Calu3 (cell line): ENCODE measurements at regions of chr2 and their contacts with region 1.

Region 1: GRCh38 chr2:206981739-206982340 is 42.5 kb downstream of the CPO start:
- DNase-seq: peak; percentile 68
- H3K4me3 Mint-ChIP-seq: no peak overlapping the region
- H3K27ac Mint-ChIP-seq: no peak overlapping the region
- H3K4me1 Mint-ChIP-seq: no peaks in the 10 kb centered on the region
- H3K27me3 Mint-ChIP-seq: no peaks in the 10 kb centered on the region
- CTCF ChIP-seq: peak; percentile 28

Region 2: DNA sequence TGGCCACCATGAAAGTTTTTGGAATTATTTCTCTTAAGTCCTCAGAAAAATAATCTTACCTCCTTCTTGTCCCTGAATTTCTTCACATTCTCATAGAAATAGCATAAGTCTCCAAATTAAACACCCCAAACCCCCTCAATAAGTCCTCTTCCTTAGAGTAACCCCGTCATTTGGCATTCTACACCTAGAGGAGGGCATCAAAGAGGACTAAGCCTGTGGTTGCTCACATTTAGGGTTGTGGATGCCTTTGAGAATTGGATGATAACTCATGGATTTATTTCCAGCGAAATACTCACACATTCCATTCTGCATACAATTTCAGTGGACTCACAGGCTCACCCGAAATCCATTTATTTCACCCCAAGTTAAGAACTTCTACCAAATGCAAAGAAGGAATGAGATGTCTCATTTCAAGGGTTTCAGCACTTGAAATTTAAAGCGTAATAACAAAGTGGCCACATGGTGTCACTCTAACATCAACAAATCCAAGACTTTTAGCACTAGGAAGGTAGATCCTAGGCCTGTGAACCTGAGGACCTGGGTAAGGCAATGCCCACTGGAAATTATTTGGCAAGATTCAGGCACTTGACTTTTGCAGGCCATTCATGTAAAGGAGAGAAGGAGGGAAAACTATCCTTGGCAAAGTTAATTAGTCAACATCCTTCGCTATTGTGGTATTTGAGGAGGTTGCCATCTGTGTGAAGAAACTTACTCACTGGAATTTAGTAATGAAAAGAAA is 288.3 kb before region 1 on chr2:
- CTCF ChIA-PET with region 1: no interaction called
- intact Hi-C with region 1: loop called (anchors 10 kb)
- DNase-seq: peak; percentile 58
- H3K4me3 Mint-ChIP-seq: no peak overlapping the region
- H3K27ac Mint-ChIP-seq: no peak overlapping the region
- H3K4me1 Mint-ChIP-seq: no peaks in the 10 kb centered on the region
- H3K27me3 Mint-ChIP-seq: peaks cover 11% of the 10 kb centered on the region
- CTCF ChIP-seq: peak; percentile 70

Region 3: GRCh38 chr2:206800506-206801417 is 181.1 kb before region 1 on chr2:
- CTCF ChIA-PET with region 1: interaction called, 4 read pairs
- intact Hi-C with region 1: loop called (anchors 5 kb)
- DNase-seq: peak; percentile 64
- H3K4me3 Mint-ChIP-seq: no peak overlapping the region
- H3K27ac Mint-ChIP-seq: no peak overlapping the region
- H3K4me1 Mint-ChIP-seq: no peaks in the 10 kb centered on the region
- H3K27me3 Mint-ChIP-seq: no peaks in the 10 kb centered on the region
- CTCF ChIP-seq: peak; percentile 62

Region 4: GRCh38 chr2:207103132-207103531 is 121.3 kb after region 1 on chr2:
- CTCF ChIA-PET with region 1: no interaction called
- intact Hi-C with region 1: no loop called
- DNase-seq: no peak
- H3K4me3 Mint-ChIP-seq: no peak overlapping the region
- H3K27ac Mint-ChIP-seq: no peak overlapping the region
- H3K4me1 Mint-ChIP-seq: no peaks in the 10 kb centered on the region
- H3K27me3 Mint-ChIP-seq: no peaks in the 10 kb centered on the region
- CTCF ChIP-seq: no peak

Region 5: GRCh38 chr2:207173660-207174059 is 191.8 kb after region 1 on chr2:
- CTCF ChIA-PET with region 1: no interaction called
- intact Hi-C with region 1: loop called (anchors 5 kb)
- DNase-seq: no peak
- H3K4me3 Mint-ChIP-seq: no peak overlapping the region
- H3K27ac Mint-ChIP-seq: no peak overlapping the region
- H3K4me1 Mint-ChIP-seq: peaks cover 8% of the 10 kb centered on the region
- H3K27me3 Mint-ChIP-seq: no peaks in the 10 kb centered on the region
- CTCF ChIP-seq: no peak

Region 6: GRCh38 chr2:207473049-207473930 is 491.4 kb after region 1 on chr2:
- CTCF ChIA-PET with region 1: interaction called, 7 read pairs
- intact Hi-C with region 1: loop called (anchors 1 kb)
- DNase-seq: no peak
- H3K4me3 Mint-ChIP-seq: no peak overlapping the region
- H3K27ac Mint-ChIP-seq: no peak overlapping the region
- H3K4me1 Mint-ChIP-seq: peaks cover 14% of the 10 kb centered on the region
- H3K27me3 Mint-ChIP-seq: no peaks in the 10 kb centered on the region
- CTCF ChIP-seq: peak; percentile 20